ENCODE measurements at regions of chr18 and their contacts with region 1.

Region 1: GRCh38 chr18:3995476-3996102 is 459.5 kb downstream of the DLGAP1 start:
- DNase-seq: peak in 1 of 2 donors; percentile 64
- ATAC-seq: peak in 4 of 8 donors; percentile 61 to 80 (median 66)
- H3K4me3 ChIP-seq: peak overlapping the region in 2 of 10 donors; percentile 13 to 24
- H3K27ac ChIP-seq: no peak overlapping the region
- H3K4me1 ChIP-seq: peaks cover 0 to 18% (median 3%) of the 10 kb centered on the region in 9 donors
- H3K27me3 ChIP-seq: no peaks in the 10 kb centered on the region
- CTCF ChIP-seq: peak; percentile 72 to 92 (median 89)

Region 2: DNA sequence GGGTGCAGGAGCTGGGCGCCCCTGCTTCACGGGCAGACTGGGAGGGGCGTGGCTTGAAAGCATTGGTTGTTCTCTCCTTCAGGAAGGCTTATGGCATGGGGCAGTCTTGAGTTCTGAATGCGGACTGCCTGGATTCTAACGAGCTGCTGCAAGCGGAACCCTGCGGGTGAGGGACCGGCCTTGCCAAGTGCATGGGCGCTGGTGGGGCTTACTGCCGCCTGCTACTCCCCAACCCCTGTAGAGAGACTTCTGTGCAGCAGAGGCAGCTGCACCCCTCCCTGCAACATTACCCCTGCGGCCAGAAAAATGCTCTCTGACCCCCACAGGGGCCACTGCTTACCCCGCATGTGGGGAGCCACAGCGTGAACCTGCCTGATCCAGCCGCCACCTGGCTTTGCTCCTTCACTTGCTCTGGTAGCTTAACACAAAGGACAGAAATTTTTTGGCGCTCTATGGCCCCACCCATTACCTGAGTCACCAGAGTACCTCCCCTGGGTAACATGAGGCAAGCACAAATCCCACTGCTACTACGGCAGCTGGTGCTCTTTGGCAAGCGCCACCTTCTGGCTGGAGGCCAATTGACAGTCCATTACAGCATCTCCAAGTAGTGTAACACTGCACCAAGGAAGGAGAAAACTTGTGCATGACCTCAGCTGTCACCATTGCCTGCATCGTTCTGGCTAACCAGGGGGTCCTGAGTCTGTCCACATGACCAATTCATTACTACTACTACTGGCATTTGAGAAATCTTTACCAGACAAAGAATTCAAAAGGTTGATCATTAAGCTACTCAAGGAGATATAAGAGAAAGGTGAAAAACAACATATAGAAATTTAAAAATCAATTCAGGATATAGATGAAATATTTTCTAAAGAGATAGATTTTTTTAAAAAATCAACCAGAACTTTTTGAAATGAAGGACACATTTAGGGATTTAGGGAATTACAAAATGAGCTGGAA is 698.3 kb before region 1 on chr18:
- intact Hi-C with region 1: loop called in 1 of 10 experiments (anchors 10 kb)
- DNase-seq: peak; percentile 76 to 79
- ATAC-seq: peak; percentile 67 to 96 (median 92)
- H3K4me3 ChIP-seq: peak overlapping the region; percentile 11 to 71 (median 60)
- H3K27ac ChIP-seq: peak overlapping the region in 3 of 10 donors; percentile 21 to 73 (median 30)
- H3K4me1 ChIP-seq: peaks cover 0 to 13% (median 0%) of the 10 kb centered on the region in 9 donors
- H3K27me3 ChIP-seq: peaks cover 0 to 24% (median 5%) of the 10 kb centered on the region in 7 donors
- CTCF ChIP-seq: peak in 7 of 9 donors; percentile 9 to 60 (median 47)

Region 3: GRCh38 chr18:3703732-3704176 is 291.8 kb before region 1 on chr18:
- intact Hi-C with region 1: loop called (anchors 2 to 10 kb)
- DNase-seq: peak; percentile 44 to 64
- ATAC-seq: peak; percentile 53 to 91 (median 79)
- H3K4me3 ChIP-seq: peak overlapping the region in 4 of 10 donors; percentile 3 to 26 (median 18)
- H3K27ac ChIP-seq: peak overlapping the region in 4 of 10 donors; percentile 32 to 60 (median 42)
- H3K4me1 ChIP-seq: peaks cover 0 to 25% (median 12%) of the 10 kb centered on the region in 9 donors
- H3K27me3 ChIP-seq: no peaks in the 10 kb centered on the region
- CTCF ChIP-seq: peak; percentile 33 to 76 (median 66)

Region 4: GRCh38 chr18:3857544-3857943 is 138.0 kb before region 1 on chr18:
- intact Hi-C with region 1: loop called in 3 of 10 experiments (anchors 5 to 10 kb)
- DNase-seq: no peak
- ATAC-seq: no peak
- H3K4me3 ChIP-seq: no peak overlapping the region
- H3K27ac ChIP-seq: no peak overlapping the region
- H3K4me1 ChIP-seq: no peaks in the 10 kb centered on the region
- H3K27me3 ChIP-seq: no peaks in the 10 kb centered on the region
- CTCF ChIP-seq: no peak

Region 5: GRCh38 chr18:3923750-3924149 is 71.8 kb before region 1 on chr18:
- intact Hi-C with region 1: loop called in 1 of 10 experiments (anchors 10 kb)
- DNase-seq: no peak
- ATAC-seq: no peak
- H3K4me3 ChIP-seq: no peak overlapping the region
- H3K27ac ChIP-seq: no peak overlapping the region
- H3K4me1 ChIP-seq: peaks cover 0 to 43% (median 10%) of the 10 kb centered on the region in 9 donors
- H3K27me3 ChIP-seq: no peaks in the 10 kb centered on the region
- CTCF ChIP-seq: no peak

Region 6: GRCh38 chr18:4040391-4041092 is 45.0 kb after region 1 on chr18:
- intact Hi-C with region 1: no loop called
- DNase-seq: no peak
- ATAC-seq: no peak
- H3K4me3 ChIP-seq: no peak overlapping the region
- H3K27ac ChIP-seq: no peak overlapping the region
- H3K4me1 ChIP-seq: no peaks in the 10 kb centered on the region
- H3K27me3 ChIP-seq: peaks cover 0 to 9% (median 0%) of the 10 kb centered on the region in 7 donors
- CTCF ChIP-seq: no peak

Region 7: DNA sequence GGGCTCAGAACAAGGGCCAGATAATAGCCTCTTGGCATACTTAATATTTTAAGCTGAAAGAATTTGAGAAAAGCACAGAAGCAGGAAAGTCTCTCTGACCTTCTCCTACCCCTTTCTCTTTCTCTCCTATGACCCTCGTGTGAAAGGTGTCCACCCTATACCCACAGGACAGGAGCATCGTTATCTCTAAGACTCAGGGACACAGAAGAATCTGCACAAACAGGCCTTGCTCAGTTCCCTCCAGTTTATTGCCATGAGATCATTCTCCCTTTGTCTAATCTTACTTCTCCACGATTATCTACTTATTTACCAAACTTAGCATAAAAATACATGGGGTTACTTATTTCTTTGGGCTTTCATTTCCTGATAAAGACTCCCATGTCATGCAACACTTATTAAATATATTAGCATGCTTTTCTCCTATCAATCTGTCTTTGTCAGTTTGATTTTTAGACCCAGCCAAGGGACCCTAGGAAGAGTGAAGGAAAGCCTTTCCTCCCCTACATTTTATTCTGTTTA is 88.9 kb after region 1 on chr18:
- intact Hi-C with region 1: no loop called
- DNase-seq: no peak
- ATAC-seq: no peak
- H3K4me3 ChIP-seq: no peak overlapping the region
- H3K27ac ChIP-seq: no peak overlapping the region
- H3K4me1 ChIP-seq: no peaks in the 10 kb centered on the region
- H3K27me3 ChIP-seq: peaks cover 0 to 4% (median 0%) of the 10 kb centered on the region in 7 donors
- CTCF ChIP-seq: no peak

Measured in heart right ventricle (tissue), 16 donors.